Heart left ventricle (tissue), 16 donors: ENCODE measurements at regions of chr3 and their contacts with region 1.

Region 1: GRCh38 chr3:13648060-13649001 is 99.4 kb downstream of the FBLN2 start:
- DNase-seq: peak; percentile 74 to 91 (median 83)
- ATAC-seq: peak; percentile 47 to 91 (median 79)
- H3K4me3 ChIP-seq: peak overlapping the region in 1 of 12 donors; percentile 10
- H3K27ac ChIP-seq: no peak overlapping the region
- H3K4me1 ChIP-seq: peaks cover 0 to 23% (median 5%) of the 10 kb centered on the region in 12 donors
- H3K27me3 ChIP-seq: peaks cover 0 to 28% (median 3%) of the 10 kb centered on the region in 9 donors
- CTCF ChIP-seq: peak; percentile 94 to 99 (median 98)
- POLR2A ChIP-seq: no peak

Region 2: GRCh38 chr3:12868039-12869034 is 780.0 kb before region 1 on chr3:
- intact Hi-C with region 1: loop called in 1 of 10 experiments (anchors 10 kb)
- DNase-seq: peak; percentile 85 to 90 (median 86)
- ATAC-seq: peak; percentile 83 to 96 (median 94)
- H3K4me3 ChIP-seq: peak overlapping the region in 9 of 12 donors; percentile 1 to 47 (median 26)
- H3K27ac ChIP-seq: peak overlapping the region in 1 of 12 donors; percentile 25
- H3K4me1 ChIP-seq: peaks cover 0 to 13% (median 8%) of the 10 kb centered on the region in 12 donors
- H3K27me3 ChIP-seq: peaks cover 0 to 13% (median 0%) of the 10 kb centered on the region in 9 donors
- CTCF ChIP-seq: peak; percentile 80 to 98 (median 92)
- POLR2A ChIP-seq: no peak

Region 3: DNA sequence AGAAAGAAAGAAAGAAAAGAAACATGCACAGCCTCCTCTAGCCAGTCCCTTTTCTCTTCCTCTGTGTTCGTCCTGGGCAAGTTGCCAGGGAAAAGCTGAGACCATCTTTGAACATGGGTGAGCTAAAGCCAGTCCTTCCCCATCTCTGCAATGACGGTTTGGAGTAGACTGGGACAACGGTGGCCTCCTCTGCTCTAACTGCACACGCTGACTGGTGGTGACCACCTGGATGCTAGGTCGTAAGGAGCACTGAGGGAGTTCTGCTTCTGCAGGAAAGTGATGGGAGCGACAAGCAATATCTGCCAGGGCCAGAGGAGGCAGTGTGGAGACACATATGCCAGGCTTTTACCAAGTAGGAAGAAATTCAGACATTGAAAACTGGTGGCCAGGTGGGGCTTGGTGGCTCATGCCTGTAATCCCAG is 339.9 kb before region 1 on chr3:
- intact Hi-C with region 1: loop called in 2 of 10 experiments (anchors 10 kb)
- DNase-seq: no peak
- ATAC-seq: peak in 2 of 4 donors; percentile 36 to 52
- H3K4me3 ChIP-seq: no peak overlapping the region
- H3K27ac ChIP-seq: no peak overlapping the region
- H3K4me1 ChIP-seq: no peaks in the 10 kb centered on the region
- H3K27me3 ChIP-seq: no peaks in the 10 kb centered on the region
- CTCF ChIP-seq: peak in 7 of 12 donors; percentile 27 to 52 (median 42)
- POLR2A ChIP-seq: no peak

Region 4: DNA sequence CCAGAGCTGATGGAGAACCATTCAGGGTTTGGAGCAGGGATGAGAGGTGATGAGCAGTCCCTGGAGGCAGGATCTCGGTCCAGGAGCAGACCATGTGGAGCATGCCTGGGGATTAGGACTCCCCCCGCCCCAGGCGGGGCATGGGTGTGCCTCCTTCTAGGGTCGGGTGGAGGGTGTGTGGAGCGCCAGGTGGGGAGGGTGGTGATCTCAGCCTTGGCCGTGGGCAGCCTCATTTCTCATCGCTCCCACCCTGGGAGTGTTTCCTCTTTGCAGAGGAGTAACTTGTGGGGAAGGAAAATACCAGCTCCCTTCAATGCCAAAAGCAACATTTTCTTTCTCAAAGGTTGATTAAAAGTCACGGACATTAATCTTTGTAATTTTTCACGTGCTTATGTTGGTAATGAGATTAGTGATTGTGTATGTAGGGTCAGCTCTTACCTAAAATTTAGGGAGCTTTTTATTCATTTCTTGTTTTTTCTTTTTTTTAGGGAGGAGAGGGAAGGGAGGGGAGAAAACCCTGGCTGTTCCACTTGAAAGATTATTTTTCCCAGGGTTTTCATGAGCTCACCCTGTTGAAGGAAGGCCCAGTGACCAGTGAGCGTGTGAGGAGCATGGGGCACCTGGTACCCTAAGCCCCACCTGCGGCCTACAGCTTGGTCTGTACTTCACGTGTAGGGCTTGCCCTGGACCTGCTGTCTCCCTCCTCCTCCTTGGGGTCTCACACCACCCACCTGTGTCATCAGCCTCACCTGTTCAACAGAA is 88.4 kb before region 1 on chr3:
- intact Hi-C with region 1: loop called in 3 of 10 experiments (anchors 5 to 10 kb)
- DNase-seq: peak; percentile 57 to 67 (median 63)
- ATAC-seq: peak; percentile 43 to 82 (median 78)
- H3K4me3 ChIP-seq: no peak overlapping the region
- H3K27ac ChIP-seq: peak overlapping the region in 9 of 12 donors; percentile 27 to 80 (median 62)
- H3K4me1 ChIP-seq: peaks cover 0 to 72% (median 28%) of the 10 kb centered on the region in 12 donors
- H3K27me3 ChIP-seq: no peaks in the 10 kb centered on the region
- CTCF ChIP-seq: no peak
- POLR2A ChIP-seq: no peak

Region 5: GRCh38 chr3:14124615-14125190 is 476.4 kb after region 1 on chr3 and contains the starts of genes CHCHD4 and TMEM43:
- intact Hi-C with region 1: loop called in 1 of 10 experiments (anchors 10 kb)
- DNase-seq: peak; percentile 99 to 100 (median 100)
- ATAC-seq: peak; percentile 89 to 95 (median 92)
- H3K4me3 ChIP-seq: peak within 1 kb of the TSS; percentile 68 to 91 (median 85)
- H3K27ac ChIP-seq: peak within 1 kb of the TSS; percentile 88 to 96 (median 92)
- H3K4me1 ChIP-seq: peaks cover 9 to 48% (median 32%) of the 10 kb centered on the region in 12 donors
- H3K27me3 ChIP-seq: no peaks in the 10 kb centered on the region
- CTCF ChIP-seq: peak in 1 of 12 donors; percentile 21
- POLR2A ChIP-seq: peak in 1 of 2 donors; percentile 79
- total RNA-seq, gene CHCHD4: 14.8 to 31.1 (median 25.9) TPM
- total RNA-seq, gene TMEM43: 30.5 to 98.6 (median 46.0) TPM

Region 6: DNA sequence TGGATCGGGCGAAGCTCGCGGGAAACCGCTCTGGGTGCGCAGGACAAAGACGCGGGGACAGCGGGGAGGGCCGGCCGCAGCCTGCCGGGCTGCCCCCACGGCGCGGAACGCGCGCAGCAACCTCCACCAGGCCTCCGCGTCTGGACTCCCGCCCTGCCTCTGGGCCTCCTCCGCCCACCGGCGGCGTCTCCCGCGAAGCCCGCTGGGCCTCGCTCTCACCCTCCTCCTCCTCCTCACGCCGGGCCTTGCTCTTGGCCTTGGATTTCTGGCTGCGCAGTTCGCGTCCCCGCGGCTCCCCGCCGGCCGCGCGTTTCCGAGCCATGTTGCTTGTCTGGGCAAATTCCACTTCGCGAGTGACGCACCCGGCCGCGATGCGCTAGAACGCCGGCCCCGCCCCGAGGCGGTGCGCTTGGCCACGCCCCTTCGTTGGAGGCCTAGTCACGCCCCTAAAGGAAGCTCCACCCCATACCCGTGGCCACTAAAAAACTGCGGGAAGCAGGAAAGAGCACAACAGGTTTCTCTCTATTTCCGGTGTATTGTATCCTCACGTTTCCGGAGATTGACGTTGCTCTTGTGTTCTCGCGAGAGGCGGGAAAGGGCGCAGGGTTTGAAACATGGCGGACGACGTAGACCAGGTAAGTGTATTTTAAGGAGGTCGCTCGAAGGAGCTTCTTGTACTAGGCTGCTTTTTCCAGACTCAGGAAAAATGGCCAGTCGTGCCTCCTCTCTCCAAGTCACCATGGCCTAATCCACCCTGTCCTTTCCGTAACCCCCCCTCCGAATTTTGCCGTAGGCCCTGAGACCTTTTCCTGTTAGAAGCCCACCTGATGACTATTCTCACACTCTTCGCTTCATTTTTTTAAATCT is 530.1 kb after region 1 on chr3 and contains the starts of genes LSM3 and XPC:
- intact Hi-C with region 1: loop called in 1 of 10 experiments (anchors 10 kb)
- DNase-seq: peak; percentile 96 to 99 (median 97)
- ATAC-seq: peak; percentile 99 to 100 (median 100)
- H3K4me3 ChIP-seq: peak within 1 kb of the TSS; percentile 51 to 92 (median 76)
- H3K27ac ChIP-seq: peak within 1 kb of the TSS; percentile 56 to 98 (median 94)
- H3K4me1 ChIP-seq: peaks cover 0 to 47% (median 32%) of the 10 kb centered on the region in 12 donors
- H3K27me3 ChIP-seq: no peaks in the 10 kb centered on the region
- CTCF ChIP-seq: peak in 1 of 12 donors; percentile 8
- POLR2A ChIP-seq: peak; percentile 68 to 97
- total RNA-seq, gene LSM3: 11.6 to 15.9 (median 13.7) TPM
- total RNA-seq, gene XPC: 7.0 to 20.0 (median 11.1) TPM